ENCODE measurements at regions of chr10 and their contacts with region 1.

Region 1: DNA sequence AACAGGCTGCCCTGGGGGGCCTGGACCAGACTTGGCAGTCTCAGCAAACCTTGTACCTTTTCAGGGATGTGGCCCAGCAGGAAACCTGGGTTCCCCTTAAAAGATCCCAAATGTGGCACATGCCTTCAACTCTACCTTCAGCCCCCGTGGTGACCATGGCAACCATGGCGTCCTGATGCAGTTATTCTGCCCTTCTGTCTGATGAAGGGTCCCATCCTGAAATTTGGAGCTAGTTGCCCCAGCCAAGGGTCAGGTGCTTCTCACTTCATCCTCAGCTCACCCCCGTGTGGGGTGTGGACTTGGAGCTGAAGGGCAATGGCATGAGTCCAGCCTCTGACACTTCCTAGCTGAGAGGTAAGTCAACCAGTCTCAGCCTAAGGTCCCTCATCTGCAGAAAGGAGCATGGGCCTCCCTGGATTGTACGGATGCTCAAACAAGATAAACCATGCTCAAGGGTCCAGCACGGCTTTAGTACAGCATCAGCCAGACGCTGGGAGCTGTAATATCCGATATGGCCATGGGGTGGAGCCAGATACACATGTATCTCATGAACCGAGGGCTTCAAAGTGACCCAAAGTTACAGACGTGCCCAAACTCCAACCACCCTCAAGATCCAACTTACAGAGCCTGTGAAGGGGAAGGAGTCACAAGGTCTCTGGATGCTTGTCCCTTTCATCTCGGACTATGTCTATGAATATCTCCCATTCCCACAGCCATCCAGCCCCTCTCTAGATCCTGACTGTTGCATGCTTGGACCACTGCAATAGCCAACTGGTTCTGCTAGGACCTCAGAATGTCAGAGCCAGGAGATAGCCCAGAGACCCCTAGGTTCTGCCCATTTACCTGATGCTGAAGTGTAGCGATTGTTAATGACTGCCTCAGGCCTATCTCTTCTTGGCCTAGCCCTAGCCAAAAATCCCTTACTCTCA is 142.5 kb downstream of the SH3PXD2A start:
- DNase-seq: peak; percentile 84
- ATAC-seq: peak; percentile 92
- H3K4me3 ChIP-seq: no peak overlapping the region
- H3K4me3 Mint-ChIP-seq: no peak overlapping the region
- H3K27ac ChIP-seq: no peak overlapping the region
- H3K27ac Mint-ChIP-seq: no peak overlapping the region
- H3K4me1 ChIP-seq: no peaks in the 10 kb centered on the region
- H3K4me1 Mint-ChIP-seq: no peaks in the 10 kb centered on the region
- H3K27me3 ChIP-seq: no peaks in the 10 kb centered on the region
- H3K27me3 Mint-ChIP-seq: peaks cover 6% of the 10 kb centered on the region
- CTCF ChIP-seq: peak; percentile 94

Region 2: GRCh38 chr10:103847909-103848468 is 135.2 kb after region 1 on chr10:
- CTCF ChIA-PET with region 1: interaction called, 23 read pairs
- POLR2A ChIA-PET with region 1: no interaction called
- intact Hi-C with region 1: no loop called
- DNase-seq: no peak
- ATAC-seq: no peak
- H3K4me3 ChIP-seq: no peak overlapping the region
- H3K4me3 Mint-ChIP-seq: no peak overlapping the region
- H3K27ac ChIP-seq: no peak overlapping the region
- H3K27ac Mint-ChIP-seq: no peak overlapping the region
- H3K4me1 ChIP-seq: peaks cover 16 to 17% of the 10 kb centered on the region in 2 donors
- H3K4me1 Mint-ChIP-seq: peaks cover 18% of the 10 kb centered on the region
- H3K27me3 ChIP-seq: peaks cover 0 to 32% (median 4%) of the 10 kb centered on the region in 4 experiments
- H3K27me3 Mint-ChIP-seq: peaks cover 32% of the 10 kb centered on the region
- CTCF ChIP-seq: peak; percentile 16

Region 3: DNA sequence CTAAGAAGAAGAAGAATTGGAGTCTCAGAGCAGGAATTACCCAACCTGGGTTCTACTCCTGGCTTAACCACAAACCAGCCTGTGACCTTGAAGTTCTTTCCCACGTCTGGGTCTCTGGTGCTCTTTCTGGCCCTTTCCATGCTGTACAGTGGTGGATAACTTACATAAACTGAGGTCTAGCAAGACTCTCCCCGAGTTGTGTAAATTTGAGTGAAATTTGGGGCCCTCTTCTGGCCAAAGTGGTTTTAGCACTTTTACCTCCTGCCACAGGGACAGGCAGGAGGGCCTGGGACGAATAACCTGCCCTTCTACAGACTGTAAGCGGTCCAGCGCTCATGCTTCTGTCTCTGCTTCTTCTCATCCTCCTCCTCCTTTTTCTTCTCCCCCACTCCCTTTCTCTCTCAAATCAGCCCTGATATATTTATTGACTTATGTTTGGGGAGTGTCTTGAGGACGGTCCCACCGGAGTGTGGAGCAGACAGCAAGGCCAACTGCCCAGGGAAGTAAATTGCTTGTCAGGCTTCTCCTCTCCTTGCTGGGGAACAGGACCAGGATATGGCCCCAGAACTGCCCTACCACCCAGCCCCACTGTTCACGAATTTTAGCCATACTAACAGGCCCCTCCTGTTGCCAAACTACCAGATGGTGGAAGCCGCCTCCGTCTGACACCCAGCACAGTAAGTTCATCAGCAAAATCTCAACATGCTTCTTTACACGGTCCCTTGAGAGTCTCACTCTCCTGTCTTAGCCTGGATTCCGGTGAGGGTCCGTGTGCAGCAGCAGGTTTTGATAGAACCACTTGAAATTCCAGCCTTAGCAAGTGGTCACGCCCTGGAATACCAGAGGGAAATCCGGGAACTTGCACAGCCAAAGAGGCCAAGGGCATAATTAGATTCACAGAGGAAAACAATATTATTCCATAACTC is 146.6 kb after region 1 on chr10:
- CTCF ChIA-PET with region 1: interaction called, 56 read pairs
- POLR2A ChIA-PET with region 1: no interaction called
- intact Hi-C with region 1: no loop called
- DNase-seq: peak; percentile 71
- ATAC-seq: peak; percentile 58
- H3K4me3 ChIP-seq: no peak overlapping the region
- H3K4me3 Mint-ChIP-seq: no peak overlapping the region
- H3K27ac ChIP-seq: no peak overlapping the region
- H3K27ac Mint-ChIP-seq: no peak overlapping the region
- H3K4me1 ChIP-seq: peaks cover 11 to 12% of the 10 kb centered on the region in 2 donors
- H3K4me1 Mint-ChIP-seq: peaks cover 9% of the 10 kb centered on the region
- H3K27me3 ChIP-seq: peaks cover 0 to 23% (median 11%) of the 10 kb centered on the region in 4 experiments
- H3K27me3 Mint-ChIP-seq: peaks cover 33% of the 10 kb centered on the region
- CTCF ChIP-seq: peak; percentile 77

Region 4: DNA sequence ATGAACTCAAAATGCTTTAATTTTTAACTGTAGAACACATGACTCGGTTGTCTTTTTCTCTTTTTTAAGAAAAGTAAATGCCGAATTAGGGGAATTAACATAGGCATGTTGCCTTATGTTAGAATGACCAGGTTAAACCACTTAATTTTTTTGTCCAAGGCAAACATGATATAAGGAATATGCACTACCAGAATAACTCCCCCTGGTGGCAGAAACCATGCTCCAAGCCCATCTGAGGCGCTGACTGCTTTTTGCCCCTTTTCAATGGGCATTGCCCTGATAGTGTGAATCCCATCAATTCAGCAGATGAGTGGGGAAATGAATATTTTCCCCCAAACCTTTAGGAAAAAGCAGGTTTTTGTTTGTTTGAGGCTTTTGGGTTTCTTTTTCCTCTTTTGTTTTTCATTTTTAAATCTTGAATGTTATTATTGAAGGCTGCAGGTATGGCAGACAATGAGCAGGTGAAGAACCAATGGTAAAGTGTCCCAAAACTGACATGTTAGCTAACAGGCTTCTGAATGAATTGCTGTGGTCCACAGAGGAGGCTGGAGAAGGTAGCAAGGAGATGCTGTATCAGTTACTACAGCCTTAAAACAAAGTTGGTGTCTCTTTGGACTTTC is 1212.5 kb after region 1 on chr10:
- CTCF ChIA-PET with region 1: interaction called, 3 read pairs
- POLR2A ChIA-PET with region 1: no interaction called
- intact Hi-C with region 1: loop called (anchors 10 kb)
- DNase-seq: peak; percentile 16
- ATAC-seq: no peak
- H3K4me3 ChIP-seq: no peak overlapping the region
- H3K4me3 Mint-ChIP-seq: no peak overlapping the region
- H3K27ac ChIP-seq: no peak overlapping the region
- H3K27ac Mint-ChIP-seq: no peak overlapping the region
- H3K4me1 ChIP-seq: no peaks in the 10 kb centered on the region
- H3K4me1 Mint-ChIP-seq: no peaks in the 10 kb centered on the region
- H3K27me3 ChIP-seq: no peaks in the 10 kb centered on the region
- H3K27me3 Mint-ChIP-seq: no peaks in the 10 kb centered on the region
- CTCF ChIP-seq: peak; percentile 54